SK-N-SH (cell line): ENCODE measurements at regions of chr7 and their contacts with region 1.

Region 1: DNA sequence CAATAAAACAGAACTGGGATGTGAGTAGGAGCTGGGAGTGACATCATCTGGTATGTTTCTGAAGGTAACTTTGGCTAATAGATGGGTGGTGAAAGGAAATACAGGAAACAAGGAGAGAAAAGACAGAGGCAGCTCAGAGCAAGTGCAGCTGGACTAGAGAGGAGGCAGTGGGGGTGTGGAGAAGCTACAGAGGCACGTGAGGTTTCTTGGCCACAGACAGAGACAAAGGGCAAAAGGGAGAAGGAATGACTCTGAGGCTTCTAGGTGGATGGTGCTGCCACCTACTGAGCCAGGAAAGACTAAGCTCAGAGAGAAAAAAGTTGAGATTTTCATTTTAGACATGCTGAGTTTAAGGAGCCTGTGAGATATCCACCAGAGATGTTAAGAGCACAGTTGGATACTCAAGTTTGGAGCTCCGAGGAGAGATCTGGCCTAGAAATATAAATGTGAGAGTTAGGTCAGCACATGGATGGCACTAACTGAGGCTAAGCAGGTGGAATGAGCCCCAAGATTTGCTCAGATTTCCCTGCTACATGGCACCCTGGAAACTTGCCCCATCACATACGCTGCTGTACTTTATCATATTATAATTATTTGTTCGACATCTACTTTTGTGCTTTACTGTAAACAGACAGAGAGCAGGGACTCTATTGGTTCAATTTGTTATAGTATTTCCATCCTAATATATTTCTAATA is 293.0 kb upstream of the IMMP2L start:
- DNase-seq: peak; percentile 61
- H3K4me3 ChIP-seq: no peak overlapping the region; a peak in 1 of 4 replicates
- H3K27ac ChIP-seq: peak overlapping the region in 1 of 2 experiments; percentile 11; a peak in 1 of 4 replicates
- H3K4me1 ChIP-seq: peaks cover 0 to 11% of the 10 kb centered on the region in 2 experiments; a peak in 2 of 4 replicates
- H3K27me3 ChIP-seq: no peaks in the 10 kb centered on the region
- CTCF ChIP-seq: peak; percentile 86
- EP300 ChIP-seq: no peak
- RAD21 ChIP-seq: peak; percentile 85

Region 2: DNA sequence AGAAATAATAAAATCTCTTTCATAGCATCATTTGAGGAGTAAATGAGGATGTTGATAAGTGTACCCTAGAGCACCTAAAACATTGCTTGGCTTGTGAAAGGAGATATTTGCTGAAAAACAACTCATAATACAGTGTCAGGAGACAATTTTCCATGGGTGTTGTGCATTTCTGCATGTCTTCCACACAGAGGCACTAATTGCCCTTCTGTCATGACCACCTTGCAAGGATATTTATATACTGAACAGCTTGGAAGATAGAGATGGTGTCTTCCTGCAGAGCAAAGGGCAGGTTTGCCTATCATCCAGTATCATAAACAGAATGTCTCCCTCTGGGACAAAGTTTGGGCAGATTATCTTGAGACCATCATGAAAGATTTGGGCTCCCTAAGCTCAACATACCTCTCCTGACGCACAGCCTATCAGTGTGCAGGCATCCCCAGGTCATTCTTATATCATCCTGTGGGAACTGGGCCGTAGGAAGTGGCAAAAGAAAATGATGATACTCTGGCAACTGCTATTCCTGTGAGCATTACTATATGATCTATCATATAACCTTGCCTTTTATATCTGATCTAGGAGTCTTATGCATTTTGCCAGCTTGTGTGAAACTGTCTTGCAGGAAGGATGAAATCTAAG is 1259.5 kb before region 1 on chr7:
- CTCF ChIA-PET with region 1: no interaction called
- POLR2A ChIA-PET with region 1: no interaction called
- DNase-seq: no peak
- H3K4me3 ChIP-seq: no peak overlapping the region
- H3K27ac ChIP-seq: no peak overlapping the region
- H3K4me1 ChIP-seq: no peaks in the 10 kb centered on the region; a peak in 1 of 4 replicates
- H3K27me3 ChIP-seq: no peaks in the 10 kb centered on the region
- CTCF ChIP-seq: no peak
- EP300 ChIP-seq: no peak
- RAD21 ChIP-seq: peak; percentile 46

Region 3: GRCh38 chr7:111741811-111742240 is 113.5 kb before region 1 on chr7:
- CTCF ChIA-PET with region 1: interaction called, 51 read pairs
- POLR2A ChIA-PET with region 1: interaction called, 3 read pairs
- DNase-seq: peak; percentile 79
- H3K4me3 ChIP-seq: no peak overlapping the region; a peak in 1 of 4 replicates
- H3K27ac ChIP-seq: no peak overlapping the region
- H3K4me1 ChIP-seq: peaks cover 0 to 4% of the 10 kb centered on the region in 2 experiments; a peak in 2 of 4 replicates
- H3K27me3 ChIP-seq: no peaks in the 10 kb centered on the region
- CTCF ChIP-seq: peak; percentile 92
- EP300 ChIP-seq: no peak
- RAD21 ChIP-seq: peak; percentile 96

Region 4: GRCh38 chr7:111780527-111780926 is 74.8 kb before region 1 on chr7:
- CTCF ChIA-PET with region 1: interaction called, 18 read pairs
- POLR2A ChIA-PET with region 1: no interaction called
- DNase-seq: no peak
- H3K4me3 ChIP-seq: no peak overlapping the region
- H3K27ac ChIP-seq: no peak overlapping the region
- H3K4me1 ChIP-seq: no peaks in the 10 kb centered on the region
- H3K27me3 ChIP-seq: no peaks in the 10 kb centered on the region
- CTCF ChIP-seq: no peak
- EP300 ChIP-seq: no peak
- RAD21 ChIP-seq: no peak

Region 5: DNA sequence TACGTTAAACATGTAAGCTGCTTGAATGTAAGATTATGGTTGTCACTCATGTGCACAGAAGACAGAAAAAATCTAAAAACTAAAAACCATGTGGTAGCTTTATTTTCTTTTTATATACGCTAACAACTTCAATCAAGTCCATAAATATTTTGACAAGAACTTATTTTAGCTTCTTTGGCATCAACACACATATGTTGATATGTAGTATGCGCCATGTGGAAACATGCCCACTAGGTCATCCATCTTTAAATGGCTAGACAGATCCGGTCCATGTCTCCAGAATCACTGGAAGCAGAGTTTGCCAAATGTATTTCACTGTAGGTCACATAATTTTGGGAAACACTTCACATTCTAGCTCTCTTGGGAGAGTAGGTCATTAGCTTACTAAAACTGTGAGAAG is 31.5 kb before region 1 on chr7:
- CTCF ChIA-PET with region 1: interaction called, 11 read pairs
- POLR2A ChIA-PET with region 1: no interaction called
- DNase-seq: no peak
- H3K4me3 ChIP-seq: no peak overlapping the region
- H3K27ac ChIP-seq: no peak overlapping the region
- H3K4me1 ChIP-seq: peaks cover 3 to 8% of the 10 kb centered on the region in 2 experiments; a peak in 2 of 4 replicates
- H3K27me3 ChIP-seq: no peaks in the 10 kb centered on the region
- CTCF ChIP-seq: no peak
- EP300 ChIP-seq: no peak
- RAD21 ChIP-seq: no peak

Region 6: DNA sequence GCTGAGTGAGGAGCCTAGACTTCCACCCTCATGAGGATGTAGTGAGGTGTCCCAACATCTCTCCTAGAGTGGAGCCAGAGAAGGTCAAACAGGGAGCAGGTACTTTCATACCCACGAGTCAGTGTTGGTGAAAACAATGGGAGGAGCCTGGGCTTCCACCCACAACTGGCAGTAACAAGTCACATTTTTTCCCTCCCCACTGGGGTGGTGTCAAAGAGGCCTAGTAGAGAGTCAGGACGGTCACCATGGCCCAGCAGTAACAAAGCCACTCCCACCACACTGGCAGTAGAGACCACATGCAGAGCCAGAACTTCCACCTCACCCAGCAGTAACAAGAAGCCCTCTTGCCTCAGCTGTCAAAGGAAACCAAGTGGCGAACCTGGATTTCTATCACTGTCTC is 12.8 kb before region 1 on chr7:
- CTCF ChIA-PET with region 1: interaction called, 70 read pairs
- POLR2A ChIA-PET with region 1: no interaction called
- DNase-seq: no peak
- H3K4me3 ChIP-seq: no peak overlapping the region
- H3K27ac ChIP-seq: no peak overlapping the region
- H3K4me1 ChIP-seq: peaks cover 0 to 13% of the 10 kb centered on the region in 2 experiments; a peak in 2 of 4 replicates
- H3K27me3 ChIP-seq: no peaks in the 10 kb centered on the region
- CTCF ChIP-seq: no peak
- EP300 ChIP-seq: no peak
- RAD21 ChIP-seq: no peak

Region 7: GRCh38 chr7:111878785-111879184 is 23.5 kb after region 1 on chr7:
- CTCF ChIA-PET with region 1: interaction called, 11 read pairs
- POLR2A ChIA-PET with region 1: no interaction called
- DNase-seq: no peak
- H3K4me3 ChIP-seq: no peak overlapping the region
- H3K27ac ChIP-seq: no peak overlapping the region
- H3K4me1 ChIP-seq: peaks cover 0 to 8% of the 10 kb centered on the region in 2 experiments; a peak in 2 of 4 replicates
- H3K27me3 ChIP-seq: no peaks in the 10 kb centered on the region
- CTCF ChIP-seq: no peak
- EP300 ChIP-seq: no peak
- RAD21 ChIP-seq: no peak

Region 8: DNA sequence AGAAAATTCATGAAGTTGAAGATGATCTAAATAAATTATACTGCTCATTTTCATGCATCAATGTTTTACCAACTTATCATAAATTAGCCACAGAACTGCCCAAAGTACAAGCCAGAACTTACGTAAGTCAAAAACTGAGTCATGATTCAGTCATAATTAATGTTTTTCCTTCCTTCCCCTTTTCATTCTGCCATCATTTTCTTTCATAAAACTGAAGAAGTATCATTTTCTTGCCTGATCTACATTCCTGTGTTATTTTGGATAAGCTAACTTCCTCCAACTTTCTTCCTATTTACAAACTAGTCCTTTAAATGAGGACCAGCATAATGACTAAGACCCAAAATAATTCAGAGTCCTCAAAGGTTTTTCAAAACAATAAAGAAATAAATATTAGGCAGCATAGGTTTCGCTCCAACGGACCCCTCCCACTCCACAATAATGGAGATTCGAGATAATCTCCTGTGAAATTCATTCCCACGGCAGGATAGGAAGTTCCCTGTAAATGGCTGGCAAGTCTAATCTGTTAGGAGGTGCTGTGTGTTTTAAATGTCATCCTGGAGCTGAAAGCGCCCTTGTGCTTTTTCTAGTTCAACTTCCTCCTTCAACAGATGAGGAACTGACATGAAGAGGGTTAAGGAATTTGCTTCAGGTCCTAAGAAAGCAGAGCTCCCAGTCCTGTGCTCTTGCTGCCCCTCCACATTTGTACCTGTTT is 132.0 kb after region 1 on chr7:
- CTCF ChIA-PET with region 1: no interaction called
- POLR2A ChIA-PET with region 1: no interaction called
- DNase-seq: no peak
- H3K4me3 ChIP-seq: no peak overlapping the region
- H3K27ac ChIP-seq: peak overlapping the region in 1 of 2 experiments; percentile 68; a peak in 2 of 4 replicates
- H3K4me1 ChIP-seq: peaks cover 0 to 14% of the 10 kb centered on the region in 2 experiments; a peak in 3 of 4 replicates
- H3K27me3 ChIP-seq: no peaks in the 10 kb centered on the region
- CTCF ChIP-seq: no peak
- EP300 ChIP-seq: no peak
- RAD21 ChIP-seq: no peak

Region 9: DNA sequence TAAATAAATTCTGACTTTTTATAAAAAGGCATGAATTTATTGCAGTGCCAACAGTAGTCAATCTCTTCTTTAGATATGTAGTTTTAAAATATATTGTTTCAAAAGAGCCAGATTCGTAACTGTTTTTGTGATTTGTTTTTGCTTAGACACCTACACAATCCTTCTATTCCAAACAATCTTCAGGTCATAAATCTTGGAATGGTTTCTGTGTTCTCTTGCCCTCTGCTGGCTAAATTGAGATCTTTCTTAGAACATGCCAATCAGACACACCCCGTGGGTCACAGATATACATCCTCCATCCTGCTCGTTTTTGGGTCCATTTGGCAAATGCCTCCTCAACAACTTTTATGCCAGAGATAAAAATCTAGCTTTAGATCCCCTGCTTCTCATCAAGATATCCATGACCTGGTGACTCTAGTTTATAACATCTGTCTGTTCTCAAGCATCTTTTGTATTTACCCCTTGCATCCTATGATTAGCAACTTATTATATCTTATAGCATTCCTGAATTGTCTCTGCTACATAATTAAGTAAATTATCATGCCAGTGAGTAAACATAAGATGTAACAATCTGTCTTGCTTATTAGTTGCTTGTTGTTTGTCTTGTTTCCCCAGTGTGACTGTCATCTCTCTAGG is 559.7 kb after region 1 on chr7:
- CTCF ChIA-PET with region 1: interaction called, 16 read pairs
- POLR2A ChIA-PET with region 1: no interaction called
- DNase-seq: peak; percentile 57
- H3K4me3 ChIP-seq: no peak overlapping the region
- H3K27ac ChIP-seq: no peak overlapping the region
- H3K4me1 ChIP-seq: peaks cover 0 to 11% of the 10 kb centered on the region in 2 experiments; a peak in 2 of 4 replicates
- H3K27me3 ChIP-seq: no peaks in the 10 kb centered on the region
- CTCF ChIP-seq: peak; percentile 85
- EP300 ChIP-seq: no peak
- RAD21 ChIP-seq: peak; percentile 84